Activated CD4-positive, alpha-beta T cell treated with anti-CD3 and anti-CD28 coated beads, Interleukin-2, amount 10 ng/mL, durations not matched to agents 24 days and 14 days (primary cell): ENCODE measurements at regions of chrX and their contacts with region 1.

Region 1: GRCh38 chrX:111098874-111099273 is 2.9 kb downstream of the PAK3 start:
- DNase-seq: peak; percentile 88
- H3K4me3 Mint-ChIP-seq: no peak overlapping the region
- H3K27ac Mint-ChIP-seq: no peak overlapping the region
- H3K4me1 Mint-ChIP-seq: peaks cover 13% of the 10 kb centered on the region
- H3K27me3 Mint-ChIP-seq: peaks cover 12% of the 10 kb centered on the region

Region 2: DNA sequence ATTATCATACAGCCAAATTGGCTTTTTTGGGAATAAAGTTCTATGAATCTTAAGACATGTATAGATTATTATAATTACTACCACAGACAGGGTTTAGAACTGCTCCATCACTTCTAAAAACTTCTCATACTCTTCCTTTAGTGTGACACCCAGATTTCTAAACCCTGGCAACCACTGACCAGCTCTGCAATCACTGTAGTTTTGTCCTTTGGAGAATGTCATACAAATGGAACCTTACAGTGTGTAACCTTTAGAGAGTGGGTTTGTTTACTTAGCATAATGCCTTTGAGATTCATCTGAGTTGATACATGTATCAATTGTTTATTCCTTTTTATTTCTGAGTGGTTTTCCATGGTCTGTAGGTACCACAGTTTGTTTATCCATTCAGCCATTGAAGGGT is 1001.0 kb before region 1 on chrX:
- intact Hi-C with region 1: no loop called
- DNase-seq: no peak
- H3K4me3 Mint-ChIP-seq: no peak overlapping the region
- H3K27ac Mint-ChIP-seq: no peak overlapping the region
- H3K4me1 Mint-ChIP-seq: no peaks in the 10 kb centered on the region
- H3K27me3 Mint-ChIP-seq: no peaks in the 10 kb centered on the region

Region 3: DNA sequence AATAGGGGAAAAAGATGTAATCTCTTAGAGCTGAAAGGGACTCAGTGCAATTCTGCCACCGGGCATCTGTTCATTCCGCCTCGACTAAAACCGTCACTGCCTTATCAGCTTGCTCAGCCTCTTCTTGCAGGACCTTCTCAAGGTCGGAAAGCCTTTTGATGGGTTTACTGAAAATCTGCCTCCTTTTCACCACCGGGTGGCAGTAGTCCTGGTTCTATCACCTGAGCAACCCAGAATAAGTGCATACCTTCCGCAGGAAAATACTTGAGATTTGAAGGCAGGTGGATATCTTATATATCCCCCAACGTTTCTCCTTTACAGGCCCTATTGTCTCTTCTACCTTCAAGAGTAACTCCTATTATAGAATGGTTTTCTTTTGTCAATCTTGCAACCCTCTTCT is 106.3 kb before region 1 on chrX:
- intact Hi-C with region 1: loop called (anchors 5 kb)
- DNase-seq: peak; percentile 58
- H3K4me3 Mint-ChIP-seq: no peak overlapping the region
- H3K27ac Mint-ChIP-seq: no peak overlapping the region
- H3K4me1 Mint-ChIP-seq: no peaks in the 10 kb centered on the region
- H3K27me3 Mint-ChIP-seq: peaks cover 6% of the 10 kb centered on the region

Region 4: GRCh38 chrX:111131573-111131972 is 32.7 kb after region 1 on chrX:
- intact Hi-C with region 1: no loop called
- DNase-seq: no peak
- H3K4me3 Mint-ChIP-seq: no peak overlapping the region
- H3K27ac Mint-ChIP-seq: no peak overlapping the region
- H3K4me1 Mint-ChIP-seq: peaks cover 13% of the 10 kb centered on the region
- H3K27me3 Mint-ChIP-seq: no peaks in the 10 kb centered on the region

Region 5: GRCh38 chrX:111170017-111170416 is 71.1 kb after region 1 on chrX:
- intact Hi-C with region 1: loop called (anchors 10 kb)
- DNase-seq: no peak
- H3K4me3 Mint-ChIP-seq: no peak overlapping the region
- H3K27ac Mint-ChIP-seq: no peak overlapping the region
- H3K4me1 Mint-ChIP-seq: peaks cover 6% of the 10 kb centered on the region
- H3K27me3 Mint-ChIP-seq: no peaks in the 10 kb centered on the region

Region 6: GRCh38 chrX:111244235-111244750 is 145.4 kb after region 1 on chrX:
- intact Hi-C with region 1: loop called (anchors 1 kb)
- DNase-seq: no peak
- H3K4me3 Mint-ChIP-seq: no peak overlapping the region
- H3K27ac Mint-ChIP-seq: no peak overlapping the region
- H3K4me1 Mint-ChIP-seq: no peaks in the 10 kb centered on the region
- H3K27me3 Mint-ChIP-seq: no peaks in the 10 kb centered on the region

Region 7: GRCh38 chrX:111445486-111445885 is 346.6 kb after region 1 on chrX:
- intact Hi-C with region 1: loop called (anchors 5 kb)
- DNase-seq: peak; percentile 52
- H3K4me3 Mint-ChIP-seq: no peak overlapping the region
- H3K27ac Mint-ChIP-seq: no peak overlapping the region
- H3K4me1 Mint-ChIP-seq: no peaks in the 10 kb centered on the region
- H3K27me3 Mint-ChIP-seq: peaks cover 1% of the 10 kb centered on the region

Region 8: DNA sequence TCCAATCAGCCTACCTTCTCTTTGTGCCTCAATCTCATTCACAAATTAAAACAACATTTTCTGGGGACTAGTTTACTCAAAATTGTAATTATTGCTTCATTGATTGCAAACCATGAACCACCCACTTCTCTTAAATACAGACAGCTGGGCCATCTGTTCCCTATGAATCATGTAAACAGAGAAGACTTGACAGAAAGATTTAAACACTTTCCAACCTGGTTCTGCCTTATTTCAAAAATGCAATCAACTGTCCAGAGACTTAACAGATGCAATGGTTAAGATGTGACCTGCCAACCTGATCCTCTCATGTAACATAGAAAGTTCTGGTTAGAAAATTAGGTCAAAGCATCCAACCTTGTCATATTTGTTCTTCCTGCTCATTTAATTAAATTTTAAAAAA is 391.8 kb after region 1 on chrX:
- intact Hi-C with region 1: no loop called
- DNase-seq: no peak
- H3K4me3 Mint-ChIP-seq: no peak overlapping the region
- H3K27ac Mint-ChIP-seq: no peak overlapping the region
- H3K4me1 Mint-ChIP-seq: no peaks in the 10 kb centered on the region
- H3K27me3 Mint-ChIP-seq: no peaks in the 10 kb centered on the region